RWPE1 (cell line): ENCODE measurements at regions of chr5 and their contacts with region 1.

Region 1: GRCh38 chr5:150458819-150459557 is 9.4 kb upstream of the RPS14 start:
- DNase-seq: peak; percentile 93
- H3K27ac ChIP-seq: peak overlapping the region; percentile 64
- CTCF ChIP-seq: peak; percentile 85

Region 2: DNA sequence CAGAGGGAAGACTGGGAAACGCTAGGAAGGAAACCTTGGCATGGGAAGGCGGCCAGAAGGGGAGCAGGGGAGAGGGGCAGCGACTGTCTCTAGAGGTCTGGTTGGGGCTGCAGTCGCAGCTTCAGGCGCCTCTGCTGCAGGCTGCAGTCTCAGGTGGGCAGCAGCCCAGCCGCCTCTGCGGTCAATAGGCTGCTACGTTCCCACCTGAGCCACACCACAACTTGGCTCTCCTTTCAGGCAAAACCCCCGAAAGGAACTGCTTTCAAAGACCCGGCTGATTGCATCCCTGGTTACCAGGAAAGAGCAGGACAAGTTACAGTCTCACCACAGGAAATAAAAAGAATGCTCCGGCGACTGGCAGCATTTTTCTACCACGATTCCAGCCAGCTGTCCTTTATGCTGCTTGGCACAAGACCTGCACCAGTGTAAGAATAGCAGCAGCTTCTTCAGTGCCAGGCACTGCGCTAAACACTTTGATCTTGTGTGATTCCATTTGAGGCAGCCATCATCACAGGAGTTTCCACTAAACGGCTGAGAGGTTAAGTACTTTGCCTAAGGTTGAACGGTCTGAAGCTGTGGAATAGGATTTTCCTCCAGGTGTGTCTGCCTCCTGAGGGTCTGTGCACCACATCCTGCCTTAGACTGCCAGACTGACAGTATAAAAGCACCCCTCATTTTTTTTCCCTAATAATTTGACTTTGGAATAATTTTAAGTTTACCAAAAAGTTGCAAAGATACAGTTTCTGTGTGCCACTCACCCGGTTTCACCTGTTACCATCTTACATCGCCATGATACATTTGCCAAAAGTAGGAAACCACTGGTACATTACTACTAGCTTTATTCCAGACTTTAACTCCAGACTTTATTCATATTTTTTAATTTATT is 16.9 kb before region 1 on chr5:
- CTCF ChIA-PET with region 1: no interaction called
- POLR2A ChIA-PET with region 1: no interaction called
- DNase-seq: no peak
- H3K27ac ChIP-seq: peak overlapping the region; percentile 56
- CTCF ChIP-seq: no peak

Region 3: DNA sequence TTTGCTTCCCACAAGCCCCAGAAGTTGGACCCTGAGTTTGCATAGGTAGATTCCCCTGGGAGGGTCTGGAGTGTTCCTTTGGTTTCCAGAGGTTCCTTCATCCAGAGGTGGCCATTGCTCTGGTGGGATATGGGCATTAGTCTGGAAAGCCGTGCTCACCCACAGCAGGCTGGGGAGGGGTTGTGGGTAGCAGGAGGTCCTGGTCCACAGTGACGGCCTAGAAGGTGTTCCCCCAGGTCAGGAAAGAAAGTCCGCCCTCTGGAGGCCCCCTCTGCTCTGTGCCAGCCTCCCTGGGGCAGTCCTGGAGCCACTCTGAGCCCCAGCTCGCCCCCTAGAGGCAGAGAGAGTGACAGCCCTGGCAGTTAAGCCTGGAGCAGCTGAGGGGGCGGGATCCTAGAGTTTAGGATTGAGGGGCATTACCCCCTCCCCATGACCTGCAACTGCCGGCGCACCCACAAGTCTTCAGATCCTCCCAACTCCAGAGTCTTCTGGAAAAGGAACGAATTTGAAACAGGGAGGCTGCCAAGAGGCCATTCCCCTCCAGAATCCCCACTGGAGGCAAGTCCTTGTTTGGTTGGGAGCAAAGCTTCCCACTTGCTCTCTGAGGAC is 85.7 kb after region 1 on chr5:
- CTCF ChIA-PET with region 1: interaction called, 12 read pairs
- POLR2A ChIA-PET with region 1: no interaction called
- DNase-seq: peak; percentile 77
- H3K27ac ChIP-seq: peak overlapping the region; percentile 49
- CTCF ChIP-seq: peak; percentile 87